ENCODE measurements at regions of chr6 and their contacts with region 1.

Region 1: DNA sequence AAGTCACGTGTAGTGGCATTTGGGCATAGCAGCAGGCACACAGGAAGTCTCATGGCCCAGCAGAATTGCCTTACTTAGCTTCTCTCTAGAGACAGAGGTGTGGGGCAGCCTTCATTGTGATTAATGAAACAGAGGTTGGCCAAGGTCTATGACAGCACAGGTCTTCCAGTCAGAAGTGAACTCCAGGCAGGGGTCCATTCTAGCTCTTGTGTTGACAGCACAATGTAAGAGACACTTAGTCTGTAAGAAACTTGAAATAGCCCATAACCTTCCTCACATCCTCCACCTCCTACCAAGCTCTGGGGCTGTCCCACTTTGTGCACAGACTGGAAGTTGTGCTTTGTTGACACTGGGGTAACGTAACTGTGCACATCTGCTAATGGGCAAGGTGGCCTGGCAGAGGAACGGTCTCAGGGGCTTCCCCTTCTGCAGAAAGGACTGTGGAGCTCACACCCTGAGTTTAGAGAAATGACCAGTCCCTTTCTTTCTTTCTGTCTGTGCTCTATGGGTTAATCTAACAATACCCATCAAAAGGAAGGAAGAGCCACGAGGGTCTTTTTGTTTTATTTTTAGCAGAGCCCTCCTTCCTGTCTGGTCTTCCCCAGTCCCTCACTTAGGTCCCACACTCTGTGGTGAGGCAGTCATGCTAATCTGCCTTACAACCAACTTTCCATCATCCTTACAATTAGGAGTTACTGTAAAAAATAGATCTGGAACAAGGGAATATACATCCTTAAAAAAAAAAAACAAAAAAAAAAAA is 35.6 kb upstream of the TAGAP start:
- DNase-seq: peak in 1 of 10 donors; percentile 26
- ATAC-seq: peak; percentile 56 to 77
- H3K4me3 Mint-ChIP-seq: peak overlapping the region in 9 of 10 donors; percentile 4 to 66 (median 62)
- H3K27ac Mint-ChIP-seq: peak overlapping the region in 8 of 10 donors; percentile 7 to 86 (median 79)
- H3K4me1 Mint-ChIP-seq: peaks cover 32 to 69% (median 50%) of the 10 kb centered on the region in 4 donors
- H3K27me3 Mint-ChIP-seq: no peaks in the 10 kb centered on the region

Region 2: GRCh38 chr6:158999666-159000403 is 80.6 kb before region 1 on chr6 and contains the start of gene RSPH3:
- POLR2A ChIA-PET with region 1: no interaction called
- DNase-seq: peak; percentile 80 to 93 (median 83)
- ATAC-seq: peak; percentile 83 to 87
- H3K4me3 Mint-ChIP-seq: peak within 1 kb of the TSS; percentile 92 to 99 (median 97)
- H3K27ac Mint-ChIP-seq: peak within 1 kb of the TSS; percentile 87 to 97 (median 92)
- H3K4me1 Mint-ChIP-seq: peaks cover 20 to 50% (median 23%) of the 10 kb centered on the region in 4 donors
- H3K27me3 Mint-ChIP-seq: no peaks in the 10 kb centered on the region
- polyA plus RNA-seq, gene RSPH3: 1.3 to 2.0 (median 1.8) TPM

Region 3: DNA sequence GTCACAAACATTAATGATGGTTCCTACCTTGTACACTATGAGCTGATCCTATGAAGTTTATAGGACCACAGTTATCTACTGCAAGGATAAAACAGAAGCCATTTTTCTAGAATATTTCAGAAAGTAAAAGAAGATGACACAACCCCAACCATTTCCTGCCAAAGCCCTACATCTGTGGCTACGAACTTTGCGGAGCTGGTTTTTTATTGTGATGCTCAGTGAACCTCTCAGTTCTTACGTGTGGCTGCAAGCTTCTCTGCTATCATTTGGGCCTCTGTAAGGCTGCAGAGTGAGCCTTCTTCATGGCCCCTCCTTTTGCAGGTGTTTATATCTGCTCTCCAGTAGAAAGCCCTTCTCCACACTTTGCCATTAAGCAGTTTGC is 17.8 kb before region 1 on chr6:
- POLR2A ChIA-PET with region 1: interaction called, 36 read pairs
- DNase-seq: peak in 9 of 10 donors; percentile 51 to 89 (median 80)
- ATAC-seq: peak; percentile 93 to 94
- H3K4me3 Mint-ChIP-seq: peak overlapping the region; percentile 56 to 84 (median 75)
- H3K27ac Mint-ChIP-seq: peak overlapping the region; percentile 96 to 99 (median 97)
- H3K4me1 Mint-ChIP-seq: peaks cover 43 to 96% (median 85%) of the 10 kb centered on the region in 4 donors
- H3K27me3 Mint-ChIP-seq: no peaks in the 10 kb centered on the region

Region 4: GRCh38 chr6:159092631-159093030 is 12.2 kb after region 1 on chr6:
- POLR2A ChIA-PET with region 1: interaction called, 11 read pairs
- DNase-seq: no peak
- ATAC-seq: no peak
- H3K4me3 Mint-ChIP-seq: no peak overlapping the region
- H3K27ac Mint-ChIP-seq: no peak overlapping the region
- H3K4me1 Mint-ChIP-seq: peaks cover 20 to 44% (median 33%) of the 10 kb centered on the region in 4 donors
- H3K27me3 Mint-ChIP-seq: no peaks in the 10 kb centered on the region

Region 5: GRCh38 chr6:159233365-159234101 is 153.1 kb after region 1 on chr6:
- POLR2A ChIA-PET with region 1: no interaction called
- DNase-seq: no peak
- ATAC-seq: no peak
- H3K4me3 Mint-ChIP-seq: no peak overlapping the region
- H3K27ac Mint-ChIP-seq: no peak overlapping the region
- H3K4me1 Mint-ChIP-seq: peaks cover 0 to 10% (median 5%) of the 10 kb centered on the region in 4 donors
- H3K27me3 Mint-ChIP-seq: peaks cover 25 to 43% (median 39%) of the 10 kb centered on the region in 5 donors